B cell (primary cell): ENCODE measurements at regions of chr16 and their contacts with region 1.

Region 1: DNA sequence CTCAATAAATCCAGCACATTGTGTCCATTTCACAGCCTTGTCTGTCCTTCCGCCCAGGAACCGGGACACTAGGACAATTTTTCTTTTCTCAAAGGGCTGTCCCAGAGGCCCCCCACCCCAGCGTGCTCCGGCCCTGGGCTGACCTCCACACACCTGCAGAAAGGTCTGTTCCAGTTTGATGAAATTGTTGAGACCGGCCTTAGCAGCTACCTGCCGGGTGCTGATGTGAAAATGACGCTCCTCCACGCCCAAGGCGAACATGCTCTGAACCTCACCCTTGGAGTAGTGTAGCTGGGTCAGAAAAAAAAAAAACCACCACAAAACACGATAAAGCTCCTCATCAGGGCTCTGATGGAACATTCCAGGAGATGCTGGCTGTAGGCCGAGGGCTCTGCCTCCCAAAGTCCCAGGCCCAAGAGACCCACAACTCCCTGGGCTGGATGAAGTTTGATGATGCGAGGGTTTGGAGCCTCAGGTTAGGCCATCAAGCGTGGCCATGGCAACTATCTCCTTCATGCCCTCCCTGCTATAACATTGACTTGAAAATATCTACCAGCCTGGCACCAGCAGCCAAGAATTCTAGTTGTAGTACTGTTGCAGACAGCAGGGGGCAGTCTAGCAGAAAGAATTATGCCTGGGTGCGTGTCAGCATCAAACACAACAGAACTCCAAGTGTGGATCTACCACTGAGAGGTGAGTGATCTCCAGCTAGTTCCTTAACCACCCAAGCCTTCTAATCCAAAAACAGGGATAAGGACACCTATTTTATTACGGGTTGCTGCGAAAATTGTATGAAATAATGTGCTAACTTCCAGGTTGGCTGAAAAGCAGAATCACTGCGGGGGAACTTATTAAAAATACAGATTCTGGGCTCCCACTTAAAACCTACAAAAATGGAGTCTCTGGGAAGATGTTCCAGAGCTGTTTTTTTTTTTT is 62.1 kb downstream of the RMI2 start:
- DNase-seq: peak; percentile 78
- ATAC-seq: peak; percentile 71
- H3K4me3 ChIP-seq: no peak overlapping the region
- H3K4me3 Mint-ChIP-seq: no peak overlapping the region
- H3K27ac ChIP-seq: no peak overlapping the region
- H3K27ac Mint-ChIP-seq: no peak overlapping the region
- H3K4me1 ChIP-seq: no peaks in the 10 kb centered on the region
- H3K4me1 Mint-ChIP-seq: peaks cover 2% of the 10 kb centered on the region
- H3K27me3 ChIP-seq: no peaks in the 10 kb centered on the region
- H3K27me3 Mint-ChIP-seq: no peaks in the 10 kb centered on the region
- CTCF ChIP-seq: peak; percentile 83

Region 2: DNA sequence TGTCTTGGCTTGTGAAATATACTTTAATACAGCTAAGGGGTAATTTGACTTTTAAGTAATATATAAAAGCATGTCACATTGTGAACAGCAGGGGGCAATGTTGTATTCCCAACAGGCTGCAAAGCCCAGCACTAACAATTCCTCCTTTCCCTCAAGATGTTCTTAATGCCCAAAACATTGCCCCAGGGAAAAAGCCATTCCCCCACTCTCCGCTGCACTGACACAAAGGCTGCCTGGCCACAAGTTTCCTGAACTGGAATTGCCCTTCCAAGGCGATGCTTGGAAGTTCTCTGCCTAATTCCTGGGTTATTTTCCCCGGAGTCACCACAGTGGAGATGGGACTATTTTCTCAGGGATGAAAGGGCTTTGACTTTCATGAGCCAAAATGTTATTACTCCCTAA is 435.8 kb before region 1 on chr16:
- CTCF ChIA-PET with region 1: interaction called, 50 read pairs
- POLR2A ChIA-PET with region 1: interaction called, 7 read pairs
- intact Hi-C with region 1: no loop called
- DNase-seq: peak; percentile 64
- ATAC-seq: peak; percentile 39
- H3K4me3 ChIP-seq: no peak overlapping the region
- H3K4me3 Mint-ChIP-seq: no peak overlapping the region
- H3K27ac ChIP-seq: no peak overlapping the region
- H3K27ac Mint-ChIP-seq: no peak overlapping the region
- H3K4me1 ChIP-seq: no peaks in the 10 kb centered on the region
- H3K4me1 Mint-ChIP-seq: peaks cover 6% of the 10 kb centered on the region
- H3K27me3 ChIP-seq: no peaks in the 10 kb centered on the region
- H3K27me3 Mint-ChIP-seq: no peaks in the 10 kb centered on the region
- CTCF ChIP-seq: peak; percentile 89

Region 3: DNA sequence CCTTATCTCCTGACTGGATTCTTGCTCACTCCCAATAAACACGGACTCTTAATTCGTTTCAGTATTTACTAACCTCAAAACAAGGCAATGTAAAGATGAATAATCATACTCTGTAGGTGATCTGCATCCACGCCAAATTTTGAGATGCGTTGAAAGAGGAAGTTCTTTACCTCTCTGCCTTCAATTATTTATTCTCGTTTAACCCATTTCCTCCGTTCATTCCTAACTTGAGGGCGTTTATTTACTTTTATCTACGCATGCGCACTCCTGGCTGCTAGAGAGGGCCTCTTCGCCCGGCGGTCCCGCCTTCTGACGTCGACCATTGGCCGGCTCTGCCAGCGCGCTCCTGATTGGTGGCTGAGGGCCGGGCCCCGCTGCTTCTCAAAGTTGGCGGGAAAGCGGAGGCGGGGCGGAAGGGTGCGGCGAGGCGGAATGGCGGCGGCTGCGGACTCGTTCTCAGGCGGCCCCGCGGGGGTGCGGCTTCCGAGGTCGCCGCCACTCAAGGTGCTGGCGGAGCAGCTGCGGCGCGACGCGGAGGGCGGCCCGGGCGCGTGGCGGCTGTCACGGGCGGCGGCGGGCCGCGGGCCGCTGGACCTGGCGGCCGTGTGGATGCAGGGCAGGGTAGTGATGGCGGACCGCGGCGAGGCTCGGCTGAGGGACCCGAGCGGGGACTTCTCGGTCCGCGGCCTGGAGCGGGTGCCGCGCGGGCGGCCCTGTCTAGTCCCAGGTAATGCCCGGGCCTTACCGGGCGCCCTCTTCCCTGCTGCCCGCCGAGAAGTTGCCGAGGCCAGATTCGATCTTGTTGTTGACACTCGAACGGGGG is 62.1 kb before region 1 on chr16 and contains the start of gene RMI2:
- CTCF ChIA-PET with region 1: no interaction called
- POLR2A ChIA-PET with region 1: no interaction called
- intact Hi-C with region 1: no loop called
- DNase-seq: peak; percentile 97
- ATAC-seq: peak; percentile 100
- H3K4me3 ChIP-seq: peak within 1 kb of the TSS; percentile 61 to 76 (median 70)
- H3K4me3 Mint-ChIP-seq: peak within 1 kb of the TSS; percentile 90
- H3K27ac ChIP-seq: peak within 1 kb of the TSS in 1 of 2 donors; percentile 26
- H3K27ac Mint-ChIP-seq: peak within 1 kb of the TSS; percentile 78
- H3K4me1 ChIP-seq: peaks cover 8 to 25% of the 10 kb centered on the region in 2 donors
- H3K4me1 Mint-ChIP-seq: peaks cover 39% of the 10 kb centered on the region
- H3K27me3 ChIP-seq: no peaks in the 10 kb centered on the region
- H3K27me3 Mint-ChIP-seq: no peaks in the 10 kb centered on the region
- CTCF ChIP-seq: no peak
- total RNA-seq, gene RMI2: 25.5 and 27.0 TPM in 2 replicates

Region 4: DNA sequence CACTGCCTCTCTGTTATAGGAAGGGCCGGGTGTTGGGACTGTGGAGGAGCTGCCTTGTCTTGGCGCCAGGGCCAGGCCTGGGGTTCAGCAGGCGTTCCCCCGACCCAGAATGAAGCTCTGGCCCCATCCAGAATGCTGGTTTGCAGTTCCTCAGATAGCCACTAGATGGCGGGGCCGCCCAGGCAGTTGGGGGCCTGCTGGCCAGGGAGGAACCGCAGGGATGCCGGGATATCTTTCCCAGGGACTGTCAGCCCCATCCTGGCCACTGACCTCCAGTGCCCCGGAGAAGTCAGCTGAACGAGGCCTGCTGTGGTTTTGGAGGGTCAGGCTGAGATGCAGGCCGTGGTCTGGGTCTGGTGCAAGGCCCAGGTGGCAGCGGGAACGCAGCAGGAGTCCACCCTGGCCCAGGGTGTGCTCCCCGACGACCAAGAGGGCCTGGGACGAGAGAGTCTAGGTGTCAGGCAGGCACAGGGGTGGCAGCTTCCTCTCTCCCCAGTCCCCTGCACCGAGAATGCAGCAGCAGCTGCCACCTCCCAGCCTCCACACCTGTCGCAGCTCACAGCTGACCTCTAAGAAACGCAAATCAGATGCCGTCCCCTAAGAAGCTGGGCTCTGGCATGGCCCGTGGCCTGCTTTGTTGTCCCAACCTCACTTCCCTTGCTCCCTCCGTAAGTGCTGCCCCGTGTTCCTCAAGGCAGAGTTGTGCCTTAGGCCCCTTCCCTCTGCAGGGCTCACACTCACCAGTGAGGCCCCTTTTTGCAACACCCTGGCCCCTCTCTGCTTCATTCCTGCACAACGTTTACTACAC is 10.9 kb before region 1 on chr16:
- CTCF ChIA-PET with region 1: interaction called, 66 read pairs
- POLR2A ChIA-PET with region 1: no interaction called
- intact Hi-C with region 1: no loop called
- DNase-seq: peak; percentile 76
- ATAC-seq: peak; percentile 79
- H3K4me3 ChIP-seq: no peak overlapping the region
- H3K4me3 Mint-ChIP-seq: no peak overlapping the region
- H3K27ac ChIP-seq: no peak overlapping the region
- H3K27ac Mint-ChIP-seq: no peak overlapping the region
- H3K4me1 ChIP-seq: peaks cover 0 to 6% of the 10 kb centered on the region in 2 donors
- H3K4me1 Mint-ChIP-seq: peaks cover 8% of the 10 kb centered on the region
- H3K27me3 ChIP-seq: peaks cover 0 to 3% (median 1%) of the 10 kb centered on the region in 4 experiments
- H3K27me3 Mint-ChIP-seq: no peaks in the 10 kb centered on the region
- CTCF ChIP-seq: peak; percentile 99

Region 5: GRCh38 chr16:11526655-11527350 is 119.5 kb after region 1 on chr16:
- CTCF ChIA-PET with region 1: interaction called, 36 read pairs
- POLR2A ChIA-PET with region 1: interaction called, 7 read pairs
- intact Hi-C with region 1: loop called (anchors 1 kb)
- DNase-seq: no peak
- ATAC-seq: no peak
- H3K4me3 ChIP-seq: no peak overlapping the region
- H3K4me3 Mint-ChIP-seq: no peak overlapping the region
- H3K27ac ChIP-seq: no peak overlapping the region
- H3K27ac Mint-ChIP-seq: no peak overlapping the region
- H3K4me1 ChIP-seq: no peaks in the 10 kb centered on the region
- H3K4me1 Mint-ChIP-seq: peaks cover 3% of the 10 kb centered on the region
- H3K27me3 ChIP-seq: peaks cover 0 to 4% (median 0%) of the 10 kb centered on the region in 4 experiments
- H3K27me3 Mint-ChIP-seq: peaks cover 8% of the 10 kb centered on the region
- CTCF ChIP-seq: no peak

Region 6: GRCh38 chr16:11639925-11640899 is 232.9 kb after region 1 on chr16:
- CTCF ChIA-PET with region 1: interaction called, 46 read pairs
- POLR2A ChIA-PET with region 1: no interaction called
- intact Hi-C with region 1: loop called (anchors 1 kb)
- DNase-seq: no peak
- ATAC-seq: no peak
- H3K4me3 ChIP-seq: no peak overlapping the region
- H3K4me3 Mint-ChIP-seq: no peak overlapping the region
- H3K27ac ChIP-seq: no peak overlapping the region
- H3K27ac Mint-ChIP-seq: no peak overlapping the region
- H3K4me1 ChIP-seq: peaks cover 7 to 9% of the 10 kb centered on the region in 2 donors
- H3K4me1 Mint-ChIP-seq: peaks cover 6% of the 10 kb centered on the region
- H3K27me3 ChIP-seq: no peaks in the 10 kb centered on the region
- H3K27me3 Mint-ChIP-seq: no peaks in the 10 kb centered on the region
- CTCF ChIP-seq: no peak